Mammary epithelial cell (primary cell): ENCODE measurements at regions of chr15 and their contacts with region 1.

Region 1: DNA sequence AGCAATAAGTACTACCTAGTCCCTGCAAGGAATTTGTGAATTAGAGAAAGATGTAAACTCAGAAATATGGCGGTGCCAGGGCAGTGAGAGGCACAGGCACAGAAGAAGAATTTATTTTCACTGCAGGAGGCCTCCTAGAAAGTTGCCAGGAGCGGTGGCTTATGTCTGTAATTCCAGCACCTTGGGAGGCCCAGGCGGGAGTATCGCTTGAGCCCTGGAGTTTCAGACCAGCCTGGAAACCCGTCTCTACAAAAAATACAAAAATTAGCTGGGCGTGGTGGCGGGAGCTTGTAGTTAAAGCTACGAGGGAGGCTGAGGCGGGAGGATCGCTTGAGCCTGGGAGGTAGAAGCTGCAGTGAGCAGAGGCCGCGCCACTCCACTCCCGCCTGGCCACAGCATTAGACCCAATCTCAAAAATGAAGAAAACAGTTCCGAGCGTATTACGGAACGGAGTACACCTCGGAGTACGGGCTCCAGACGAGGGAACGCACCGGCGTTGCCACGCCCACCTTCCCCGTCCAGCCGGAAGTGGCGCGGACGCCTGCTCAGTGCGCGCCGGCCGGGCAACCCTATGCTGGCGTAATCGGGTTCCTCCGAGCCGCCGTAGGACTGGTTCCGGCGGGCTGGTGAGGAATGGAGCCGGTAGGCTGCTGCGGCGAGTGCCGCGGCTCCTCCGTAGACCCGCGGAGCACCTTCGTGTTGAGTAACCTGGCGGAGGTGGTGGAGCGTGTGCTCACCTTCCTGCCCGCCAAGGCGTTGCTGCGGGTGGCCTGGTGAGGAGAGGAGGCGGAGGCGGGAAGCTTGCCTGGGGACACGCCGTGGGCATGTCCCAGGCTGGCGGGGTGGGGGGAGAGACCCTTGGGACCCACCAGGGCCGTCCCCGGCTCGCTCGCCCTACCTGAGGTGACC is at the start of gene FBXO22:
- DNase-seq: peak; percentile 94
- H3K4me3 ChIP-seq: peak within 1 kb of the TSS; percentile 79 to 99 (median 94)
- H3K27ac ChIP-seq: peak within 1 kb of the TSS; percentile 80
- H3K4me1 ChIP-seq: peaks cover 21% of the 10 kb centered on the region
- H3K27me3 ChIP-seq: no peaks in the 10 kb centered on the region
- CTCF ChIP-seq: no peak
- total RNA-seq, gene FBXO22: 64.5 to 76.2 TPM

Region 2: GRCh38 chr15:75827691-75828090 is 75.9 kb before region 1 on chr15:
- CTCF ChIA-PET with region 1: no interaction called
- dilution Hi-C with region 1: no loop called
- in situ Hi-C with region 1: no loop called
- intact Hi-C with region 1: loop called (anchors 5 kb)
- DNase-seq: peak; percentile 86
- H3K4me3 ChIP-seq: no peak overlapping the region
- H3K27ac ChIP-seq: no peak overlapping the region
- H3K4me1 ChIP-seq: peaks cover 21% of the 10 kb centered on the region
- H3K27me3 ChIP-seq: no peaks in the 10 kb centered on the region
- CTCF ChIP-seq: no peak